Activated CD4-positive, alpha-beta T cell treated with anti-CD3 and anti-CD28 coated beads, Interleukin-2, amount 10 ng/mL, durations not matched to agents 7 days and 5 days (primary cell): ENCODE measurements at regions of chr6 and their contacts with region 1.

Region 1: GRCh38 chr6:155287762-155288161 is 23.9 kb downstream of the CLDN20 start:
- DNase-seq: no peak
- H3K4me3 Mint-ChIP-seq: no peak overlapping the region
- H3K27ac Mint-ChIP-seq: no peak overlapping the region
- H3K4me1 Mint-ChIP-seq: peaks cover 6% of the 10 kb centered on the region
- H3K27me3 Mint-ChIP-seq: no peaks in the 10 kb centered on the region

Region 2: DNA sequence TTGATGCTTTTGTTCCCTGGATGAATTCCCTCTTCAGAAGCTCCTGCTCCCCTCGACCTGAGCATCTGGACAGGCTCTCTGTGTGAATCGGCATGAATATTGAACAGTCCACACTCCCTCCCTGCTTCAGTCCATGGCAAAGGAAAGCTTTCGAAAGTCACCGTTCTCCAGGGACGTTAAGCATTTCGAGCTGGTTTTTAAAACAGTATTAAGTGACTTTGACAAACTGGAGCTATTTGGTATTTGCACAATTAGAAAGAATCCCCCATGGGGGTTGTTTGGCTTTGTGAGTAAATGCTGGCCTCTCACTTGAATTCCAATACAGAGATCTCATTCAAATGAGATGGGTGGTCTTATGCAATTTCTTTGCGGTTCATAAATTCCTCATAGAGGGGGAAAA is 377.9 kb before region 1 on chr6:
- CTCF ChIA-PET with region 1: no interaction called
- POLR2A ChIA-PET with region 1: interaction called, 12 read pairs
- DNase-seq: no peak
- H3K4me3 Mint-ChIP-seq: no peak overlapping the region
- H3K27ac Mint-ChIP-seq: no peak overlapping the region
- H3K4me1 Mint-ChIP-seq: no peaks in the 10 kb centered on the region
- H3K27me3 Mint-ChIP-seq: no peaks in the 10 kb centered on the region

Region 3: DNA sequence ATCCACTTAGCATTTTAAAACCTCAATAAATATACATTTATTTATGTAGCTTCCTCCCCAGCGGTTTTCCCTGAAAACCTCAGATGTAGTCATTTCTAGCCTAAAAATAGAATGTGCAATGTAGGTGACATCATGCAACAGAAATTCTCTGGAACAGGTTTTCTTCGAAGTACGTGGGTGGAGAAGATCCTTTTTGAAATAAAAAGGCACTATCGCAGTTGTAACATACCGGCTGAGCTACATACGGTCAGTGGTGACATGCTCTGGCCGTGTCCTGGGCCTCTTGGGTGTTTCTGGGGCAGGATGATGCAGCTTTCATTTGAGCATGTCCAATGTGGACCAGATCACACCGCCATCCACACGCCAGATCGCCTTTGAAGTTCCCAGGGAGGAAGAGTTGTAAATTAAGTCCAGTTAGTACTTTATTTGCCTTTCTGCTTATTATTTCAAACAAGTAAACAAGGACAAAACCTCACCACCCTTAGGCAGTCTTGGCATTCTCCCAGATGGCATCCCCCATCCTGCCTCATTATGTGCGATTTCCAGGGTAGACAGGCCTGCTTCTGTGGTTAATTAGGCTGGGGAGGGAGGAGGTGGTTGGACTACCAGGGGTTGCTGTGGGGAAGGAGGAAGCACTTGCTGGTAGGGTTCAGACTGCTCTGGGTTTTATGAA is 133.5 kb before region 1 on chr6:
- CTCF ChIA-PET with region 1: no interaction called
- POLR2A ChIA-PET with region 1: no interaction called
- DNase-seq: peak; percentile 37
- H3K4me3 Mint-ChIP-seq: peak overlapping the region; percentile 58
- H3K27ac Mint-ChIP-seq: peak overlapping the region; percentile 93
- H3K4me1 Mint-ChIP-seq: peaks cover 76% of the 10 kb centered on the region
- H3K27me3 Mint-ChIP-seq: no peaks in the 10 kb centered on the region